PC-9 (cell line): ENCODE measurements at regions of chr11 and their contacts with region 1.

Region 1: DNA sequence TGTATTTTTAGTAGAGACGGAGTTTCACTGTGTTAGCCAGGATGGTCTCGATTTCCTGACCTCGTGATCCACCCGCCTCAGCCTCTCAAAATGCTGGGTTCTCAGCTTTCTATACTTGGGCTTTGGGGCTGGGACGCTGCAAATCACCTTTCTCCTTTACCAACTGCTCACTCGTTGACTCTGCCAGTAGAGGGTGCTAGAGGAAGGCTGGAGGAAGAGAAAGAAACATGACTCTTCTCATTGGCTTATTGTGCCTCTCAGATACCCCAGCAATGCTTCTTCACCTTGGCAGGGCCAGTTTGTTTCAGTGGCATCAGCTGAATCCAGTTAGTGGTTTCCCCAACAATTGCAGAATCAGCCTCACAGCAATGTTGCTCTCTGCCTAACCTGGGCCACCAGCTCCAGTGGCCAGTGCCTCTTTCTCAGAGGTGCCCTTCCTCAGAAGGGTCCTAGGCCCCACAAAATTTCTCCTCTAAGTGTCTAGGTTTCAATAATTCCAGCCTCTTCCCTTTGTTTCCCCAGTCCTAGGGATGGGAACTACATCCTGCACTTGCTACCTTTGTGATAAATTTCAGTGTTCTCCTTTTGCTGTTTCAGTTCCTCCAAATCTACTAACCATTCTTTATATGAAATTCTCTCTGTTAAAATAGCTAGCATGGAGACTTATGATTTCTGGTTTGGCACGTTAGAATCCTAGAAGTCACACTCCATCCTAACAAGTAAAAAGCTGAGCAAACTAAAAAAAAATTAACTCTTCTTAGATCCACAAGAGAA is 71.5 kb upstream of the VSTM5 start:
- DNase-seq: peak; percentile 32 to 63
- H3K4me3 ChIP-seq: no peak overlapping the region
- H3K27ac ChIP-seq: no peak overlapping the region
- H3K4me1 ChIP-seq: no peaks in the 10 kb centered on the region
- H3K27me3 ChIP-seq: no peaks in the 10 kb centered on the region
- CTCF ChIP-seq: peak; percentile 94

Region 2: DNA sequence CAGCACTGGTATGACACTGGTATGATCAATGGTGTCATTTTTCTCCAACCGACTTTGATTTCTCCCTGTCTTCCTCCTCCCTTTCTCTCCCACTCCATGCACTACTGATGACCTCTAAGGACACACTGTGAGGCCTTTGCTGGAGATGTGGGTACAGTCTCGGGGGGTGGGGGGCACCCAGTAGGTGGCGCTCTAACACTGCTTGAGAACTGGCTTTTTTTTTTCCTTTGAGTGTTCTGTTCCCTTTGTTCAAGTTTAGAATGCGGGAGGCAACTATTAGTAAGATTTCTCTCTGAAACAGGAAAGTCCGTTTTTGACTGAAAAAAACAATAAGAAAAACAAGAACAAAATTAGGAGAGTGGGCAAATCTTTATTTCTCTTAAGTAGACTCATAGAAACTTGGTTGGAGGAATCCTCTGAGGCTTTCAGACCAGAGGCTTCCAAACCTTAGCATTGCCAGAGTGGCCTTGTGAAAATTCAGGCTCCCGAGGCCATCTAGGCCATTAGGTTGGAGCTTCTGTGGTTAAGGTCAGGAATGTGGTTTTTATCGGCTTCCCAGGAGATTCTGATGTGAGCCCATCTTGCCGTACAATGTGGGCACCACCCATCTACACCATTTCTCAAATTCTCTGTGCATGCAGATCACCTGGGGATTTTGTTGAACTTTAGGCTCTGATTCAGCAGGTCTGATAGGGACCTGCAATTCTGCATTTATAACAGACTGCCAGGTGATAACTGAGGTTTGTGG is 250.0 kb after region 1 on chr11:
- CTCF ChIA-PET with region 1: no interaction called
- POLR2A ChIA-PET with region 1: no interaction called
- intact Hi-C with region 1: loop called (anchors 5 kb)
- DNase-seq: peak in 1 of 2 experiments; percentile 35
- H3K4me3 ChIP-seq: no peak overlapping the region
- H3K27ac ChIP-seq: no peak overlapping the region
- H3K4me1 ChIP-seq: no peaks in the 10 kb centered on the region
- H3K27me3 ChIP-seq: no peaks in the 10 kb centered on the region
- CTCF ChIP-seq: peak; percentile 93